PC-9 (cell line): ENCODE measurements at regions of chr17 and their contacts with region 1.

Region 1: DNA sequence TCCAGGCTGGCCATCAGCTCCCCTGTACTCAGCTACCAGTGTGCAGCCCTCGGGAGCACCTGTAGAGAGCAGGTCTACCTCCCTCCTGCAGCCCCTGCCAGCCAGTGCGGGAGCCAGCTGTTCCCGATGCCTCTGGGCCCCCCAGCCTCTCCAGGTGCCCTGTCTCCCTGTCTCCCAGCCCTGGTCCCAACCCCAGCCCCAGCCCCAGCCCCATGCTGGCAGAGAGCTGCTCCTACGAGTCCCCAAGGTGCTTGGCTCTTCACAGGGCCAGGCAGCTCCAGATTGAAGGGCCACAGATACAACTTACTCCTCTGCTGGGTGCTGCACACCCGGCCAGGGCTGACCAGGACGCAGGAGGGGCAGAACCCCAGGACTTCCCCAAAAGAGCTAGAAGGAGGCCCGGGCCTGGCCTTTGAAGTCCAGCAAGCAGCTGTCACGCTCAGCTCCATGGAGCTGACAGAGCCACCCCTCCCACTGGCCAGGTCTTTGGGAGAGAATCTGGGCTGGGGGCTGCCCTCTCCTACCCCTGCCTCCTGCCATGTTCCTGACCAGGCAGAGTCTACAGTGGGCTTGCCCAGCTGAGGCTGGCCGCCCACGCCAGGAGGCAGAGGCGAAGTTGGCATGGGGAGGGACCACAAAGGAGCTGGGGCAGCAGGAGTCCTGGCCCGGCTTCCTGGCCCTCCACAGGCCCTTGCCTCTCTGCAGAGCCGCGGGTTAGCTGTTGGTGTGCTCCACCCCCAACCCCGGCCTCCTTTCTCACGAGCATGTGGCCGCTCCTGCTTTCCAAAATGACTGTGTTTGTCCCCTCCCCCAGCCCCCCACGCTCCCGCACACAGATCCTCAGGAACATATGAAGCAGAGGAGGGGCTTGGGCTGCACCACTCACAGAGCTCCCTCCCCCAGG is 9.5 kb upstream of the ADAM11 start:
- DNase-seq: no peak
- H3K4me3 ChIP-seq: no peak overlapping the region
- H3K27ac ChIP-seq: no peak overlapping the region
- H3K4me1 ChIP-seq: no peaks in the 10 kb centered on the region
- H3K27me3 ChIP-seq: no peaks in the 10 kb centered on the region
- CTCF ChIP-seq: no peak

Region 2: DNA sequence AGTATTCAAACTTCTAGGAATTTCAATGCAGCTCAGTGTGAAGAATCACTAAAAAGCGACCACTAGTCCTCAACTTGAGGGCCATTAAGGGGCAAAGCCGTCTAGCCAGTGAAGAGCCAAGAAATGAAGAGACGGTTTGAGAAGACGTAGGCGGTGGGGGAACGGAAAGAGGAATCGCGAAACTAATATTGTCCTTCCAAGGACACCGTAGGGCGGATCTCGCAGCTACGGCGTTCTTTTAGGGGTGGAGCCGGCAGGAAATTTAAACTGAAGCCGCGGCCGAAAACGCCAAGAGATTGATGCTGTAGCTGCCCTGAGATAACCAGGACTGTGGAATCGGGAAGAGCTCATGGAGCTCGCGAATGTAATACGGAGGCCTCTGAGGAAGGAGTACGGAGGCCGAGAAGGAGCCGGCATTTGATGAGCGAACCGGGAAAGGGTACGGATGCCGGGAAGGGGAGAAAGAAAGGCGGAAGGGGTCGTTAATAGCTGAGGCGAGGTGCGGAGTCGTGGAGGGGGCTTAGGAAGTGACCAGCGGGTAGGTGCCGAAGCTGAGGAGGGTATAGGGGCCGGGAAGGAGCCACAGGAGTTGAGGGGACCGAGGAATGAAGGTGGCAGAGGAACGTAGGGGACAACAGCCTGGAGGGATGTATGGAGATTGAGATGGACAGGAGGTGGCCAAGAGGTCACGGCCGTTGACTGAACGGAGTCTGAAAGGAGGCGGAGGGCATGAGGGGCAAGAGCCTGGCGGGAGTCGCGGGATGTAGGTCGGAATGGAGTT is 40.7 kb before region 1 on chr17 and contains the start of gene DBF4B:
- CTCF ChIA-PET with region 1: interaction called, 12 read pairs
- POLR2A ChIA-PET with region 1: no interaction called
- intact Hi-C with region 1: no loop called
- DNase-seq: peak; percentile 71 to 75
- H3K4me3 ChIP-seq: peak within 1 kb of the TSS; percentile 81
- H3K27ac ChIP-seq: peak within 1 kb of the TSS; percentile 69
- H3K4me1 ChIP-seq: peaks cover 11% of the 10 kb centered on the region
- H3K27me3 ChIP-seq: no peaks in the 10 kb centered on the region
- CTCF ChIP-seq: no peak
- total RNA-seq, gene DBF4B: 29.6 and 33.3 TPM in 2 replicates

Region 3: GRCh38 chr17:44844390-44844830 is 95.1 kb after region 1 on chr17:
- CTCF ChIA-PET with region 1: no interaction called
- POLR2A ChIA-PET with region 1: no interaction called
- intact Hi-C with region 1: no loop called
- DNase-seq: no peak
- H3K4me3 ChIP-seq: no peak overlapping the region
- H3K27ac ChIP-seq: no peak overlapping the region
- H3K4me1 ChIP-seq: no peaks in the 10 kb centered on the region
- H3K27me3 ChIP-seq: no peaks in the 10 kb centered on the region
- CTCF ChIP-seq: no peak